ENCODE measurements at regions of chrX and their contacts with region 1.

Region 1: GRCh38 chrX:120549483-120550452 is 11.0 kb downstream of the CUL4B start:
- DNase-seq: peak; percentile 82
- H3K4me3 ChIP-seq: peak overlapping the region in 1 of 3 experiments; percentile 17
- H3K27ac ChIP-seq: peak overlapping the region; percentile 81
- H3K4me1 ChIP-seq: peaks cover 41% of the 10 kb centered on the region
- H3K27me3 ChIP-seq: no peaks in the 10 kb centered on the region
- CTCF ChIP-seq: no peak
- POLR2A ChIP-seq: peak; percentile 55

Region 2: GRCh38 chrX:120090208-120090607 is 459.6 kb before region 1 on chrX:
- CTCF ChIA-PET with region 1: no interaction called
- POLR2A ChIA-PET with region 1: no interaction called
- dilution Hi-C with region 1: no loop called
- intact Hi-C with region 1: no loop called
- DNase-seq: no peak
- H3K4me3 ChIP-seq: no peak overlapping the region
- H3K27ac ChIP-seq: no peak overlapping the region
- H3K4me1 ChIP-seq: no peaks in the 10 kb centered on the region
- H3K27me3 ChIP-seq: no peaks in the 10 kb centered on the region
- CTCF ChIP-seq: no peak
- POLR2A ChIP-seq: no peak

Region 3: DNA sequence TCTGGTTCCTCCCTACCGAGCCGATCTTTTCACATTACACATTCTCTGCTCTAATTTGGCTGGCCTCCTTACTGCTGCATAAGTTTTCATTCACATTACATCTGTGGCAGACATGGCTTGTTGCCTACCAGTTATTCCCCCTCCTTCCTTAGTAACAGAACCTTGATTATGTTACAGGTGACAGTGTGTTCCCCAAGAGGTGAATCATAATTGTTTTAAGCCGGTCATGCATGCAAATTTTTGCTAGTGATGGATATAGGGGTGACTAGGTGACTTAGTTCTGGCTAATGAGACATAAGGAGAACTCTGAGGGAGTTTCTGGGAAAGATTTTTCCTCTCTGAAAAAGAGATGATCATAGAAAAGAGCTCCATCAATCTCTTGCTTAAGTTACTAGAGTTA is 72.3 kb before region 1 on chrX:
- CTCF ChIA-PET with region 1: no interaction called
- POLR2A ChIA-PET with region 1: no interaction called
- dilution Hi-C with region 1: no loop called
- intact Hi-C with region 1: no loop called
- DNase-seq: no peak
- H3K4me3 ChIP-seq: no peak overlapping the region
- H3K27ac ChIP-seq: no peak overlapping the region
- H3K4me1 ChIP-seq: no peaks in the 10 kb centered on the region
- H3K27me3 ChIP-seq: no peaks in the 10 kb centered on the region
- CTCF ChIP-seq: no peak
- POLR2A ChIP-seq: no peak

Region 4: GRCh38 chrX:120514236-120514635 is 35.5 kb before region 1 on chrX:
- CTCF ChIA-PET with region 1: interaction called, 4 read pairs
- POLR2A ChIA-PET with region 1: no interaction called
- dilution Hi-C with region 1: no loop called
- intact Hi-C with region 1: loop called (anchors 1 kb)
- DNase-seq: peak; percentile 7
- H3K4me3 ChIP-seq: no peak overlapping the region
- H3K27ac ChIP-seq: no peak overlapping the region
- H3K4me1 ChIP-seq: peaks cover 7% of the 10 kb centered on the region
- H3K27me3 ChIP-seq: no peaks in the 10 kb centered on the region
- CTCF ChIP-seq: peak; percentile 14 to 33
- POLR2A ChIP-seq: no peak

Region 5: GRCh38 chrX:120603707-120604360 is 54.1 kb after region 1 on chrX and contains the start of gene MCTS1:
- CTCF ChIA-PET with region 1: interaction called, 3 read pairs
- POLR2A ChIA-PET with region 1: interaction called, 3 read pairs
- dilution Hi-C with region 1: no loop called
- intact Hi-C with region 1: loop called (anchors 2 kb)
- DNase-seq: peak; percentile 94
- H3K4me3 ChIP-seq: peak within 1 kb of the TSS; percentile 76 to 83 (median 79)
- H3K27ac ChIP-seq: peak within 1 kb of the TSS; percentile 72
- H3K4me1 ChIP-seq: peaks cover 10% of the 10 kb centered on the region
- H3K27me3 ChIP-seq: no peaks in the 10 kb centered on the region
- CTCF ChIP-seq: no peak
- POLR2A ChIP-seq: no peak
- total RNA-seq, gene MCTS1: 63.2 and 70.0 TPM in 2 replicates

Region 6: DNA sequence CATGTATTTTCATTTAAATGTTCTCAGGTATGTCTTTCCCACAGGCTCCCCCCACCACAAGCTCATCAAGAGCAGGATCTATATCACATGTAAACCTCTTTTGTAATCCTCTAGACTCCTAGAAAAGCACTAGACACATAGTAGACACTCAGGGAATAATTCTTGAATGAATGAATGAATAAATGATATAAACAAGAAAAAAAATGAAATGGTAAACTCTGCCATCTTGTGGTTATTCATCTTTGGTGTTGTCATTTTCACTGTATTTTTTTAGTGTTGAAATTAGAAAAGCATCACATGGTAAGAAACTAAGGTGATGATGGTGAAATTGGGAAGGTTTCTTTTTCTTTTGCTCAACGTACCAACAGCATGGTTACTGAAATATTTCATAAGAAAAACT is 114.3 kb after region 1 on chrX:
- CTCF ChIA-PET with region 1: no interaction called
- POLR2A ChIA-PET with region 1: no interaction called
- dilution Hi-C with region 1: no loop called
- intact Hi-C with region 1: loop called (anchors 1 kb)
- DNase-seq: peak; percentile 46
- H3K4me3 ChIP-seq: no peak overlapping the region
- H3K27ac ChIP-seq: no peak overlapping the region
- H3K4me1 ChIP-seq: peaks cover 5% of the 10 kb centered on the region
- H3K27me3 ChIP-seq: no peaks in the 10 kb centered on the region
- CTCF ChIP-seq: no peak
- POLR2A ChIP-seq: no peak

Measured in endothelial cell of umbilical vein (primary cell).